Spleen (tissue), 13 donors: ENCODE measurements at regions of chr2 and their contacts with region 1.

Region 1: GRCh38 chr2:73163483-73164367 is 38.6 kb upstream of the NOTO start:
- DNase-seq: peak; percentile 82
- H3K4me3 ChIP-seq: no peak overlapping the region
- H3K27ac ChIP-seq: no peak overlapping the region
- H3K4me1 ChIP-seq: peaks cover 0 to 4% (median 0%) of the 10 kb centered on the region in 6 donors
- H3K27me3 ChIP-seq: peaks cover 0 to 26% (median 0%) of the 10 kb centered on the region in 7 donors
- CTCF ChIP-seq: peak; percentile 64 to 92 (median 86)
- POLR2A ChIP-seq: no peak

Region 2: DNA sequence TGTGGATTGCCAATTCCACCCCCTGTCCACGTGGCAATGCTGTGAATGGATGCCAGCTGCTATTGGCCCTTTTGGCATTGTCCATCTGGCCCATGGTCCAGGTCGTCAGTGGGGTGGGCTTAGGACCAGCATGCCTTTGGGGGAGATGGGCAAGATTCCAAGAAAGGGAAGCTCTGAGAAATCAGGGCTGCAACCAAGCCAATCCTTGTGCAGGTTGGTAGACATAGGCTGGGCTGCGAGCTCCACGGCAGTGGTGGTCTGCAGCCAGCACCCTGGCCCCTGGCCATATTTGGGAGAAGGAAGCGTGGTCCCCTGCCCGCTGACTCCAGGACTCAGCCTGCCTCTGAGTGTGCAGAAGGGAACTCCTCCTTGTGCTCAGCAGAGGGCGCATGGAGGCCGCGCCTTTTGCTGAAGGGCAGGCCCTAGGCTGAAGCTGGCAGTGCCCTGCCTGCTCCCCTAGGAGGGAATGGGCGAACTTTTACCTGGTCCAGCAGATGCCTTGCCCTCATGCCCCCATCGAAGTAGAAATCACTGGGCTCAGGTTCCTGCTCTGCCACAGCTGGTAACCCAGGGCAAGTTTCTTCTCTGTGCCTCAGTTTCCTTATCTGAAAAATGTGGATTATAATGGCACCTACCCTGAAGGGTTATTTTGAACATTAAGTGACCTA is 271.1 kb before region 1 on chr2:
- intact Hi-C with region 1: loop called (anchors 5 kb)
- DNase-seq: peak; percentile 88
- H3K4me3 ChIP-seq: no peak overlapping the region
- H3K27ac ChIP-seq: no peak overlapping the region
- H3K4me1 ChIP-seq: peaks cover 5 to 43% (median 14%) of the 10 kb centered on the region in 6 donors
- H3K27me3 ChIP-seq: peaks cover 0 to 84% (median 20%) of the 10 kb centered on the region in 7 donors
- CTCF ChIP-seq: peak; percentile 37 to 83 (median 69)
- POLR2A ChIP-seq: no peak

Region 3: DNA sequence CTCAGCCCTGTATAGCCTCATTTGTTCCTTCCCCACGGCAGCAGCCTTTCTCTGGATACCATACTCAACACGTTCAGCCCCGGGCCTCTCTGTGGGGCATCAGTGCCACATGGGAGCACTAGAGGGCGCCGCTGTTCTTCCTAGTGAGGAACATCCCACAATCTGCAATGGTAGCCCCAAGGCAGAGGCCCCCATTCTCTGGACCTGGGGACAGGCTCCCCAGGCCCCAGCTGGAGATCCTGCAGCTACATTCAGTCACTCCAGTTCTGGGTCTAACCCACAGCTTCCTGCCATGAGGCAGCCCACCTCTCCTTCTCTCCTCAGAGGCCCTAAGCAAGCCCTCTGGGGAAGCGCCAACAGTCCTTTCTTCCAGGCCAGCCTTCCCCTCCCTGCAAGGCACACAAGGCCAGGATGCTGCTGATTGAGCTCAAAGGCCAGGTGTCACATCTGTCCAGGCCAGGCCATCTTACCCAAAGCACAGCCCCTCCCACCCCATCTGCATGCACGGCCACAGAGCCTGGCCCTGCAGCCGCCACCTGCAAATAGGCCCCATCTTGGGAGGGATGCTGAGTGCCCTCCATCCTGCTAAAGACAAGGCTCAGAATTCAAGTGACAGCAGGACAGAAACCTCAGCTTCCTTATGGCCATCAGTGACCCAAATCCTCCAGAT is 77.9 kb before region 1 on chr2:
- intact Hi-C with region 1: loop called (anchors 5 kb)
- DNase-seq: peak; percentile 95
- H3K4me3 ChIP-seq: peak overlapping the region in 1 of 8 donors; percentile 10
- H3K27ac ChIP-seq: peak overlapping the region in 4 of 8 donors; percentile 23 to 65 (median 46)
- H3K4me1 ChIP-seq: peaks cover 3 to 100% (median 40%) of the 10 kb centered on the region in 6 donors
- H3K27me3 ChIP-seq: no peaks in the 10 kb centered on the region
- CTCF ChIP-seq: peak; percentile 82 to 97 (median 91)
- POLR2A ChIP-seq: no peak